ENCODE measurements at regions of chr5 and their contacts with region 1.

Region 1: GRCh38 chr5:164504141-164504772 is 998.8 kb downstream of the MAT2B start:
- DNase-seq: peak; percentile 26 to 39 (median 36)
- H3K4me3 ChIP-seq: no peak overlapping the region
- H3K4me3 Mint-ChIP-seq: peak overlapping the region in 1 of 2 donors; percentile 39
- H3K27ac ChIP-seq: no peak overlapping the region
- H3K27ac Mint-ChIP-seq: no peak overlapping the region
- H3K4me1 ChIP-seq: no peaks in the 10 kb centered on the region
- H3K4me1 Mint-ChIP-seq: peaks cover 5% of the 10 kb centered on the region
- H3K27me3 ChIP-seq: no peaks in the 10 kb centered on the region
- H3K27me3 Mint-ChIP-seq: peaks cover 0 to 5% (median 0%) of the 10 kb centered on the region in 3 donors
- CTCF ChIP-seq: peak; percentile 83

Region 2: GRCh38 chr5:163564321-163564938 is 939.8 kb before region 1 on chr5:
- intact Hi-C with region 1: loop called (anchors 5 kb)
- DNase-seq: peak; percentile 30 to 54 (median 45)
- H3K4me3 ChIP-seq: no peak overlapping the region
- H3K4me3 Mint-ChIP-seq: peak overlapping the region in 1 of 2 donors; percentile 89
- H3K27ac ChIP-seq: no peak overlapping the region
- H3K27ac Mint-ChIP-seq: no peak overlapping the region
- H3K4me1 ChIP-seq: peaks cover 9 to 10% of the 10 kb centered on the region in 2 donors
- H3K4me1 Mint-ChIP-seq: peaks cover 12% of the 10 kb centered on the region
- H3K27me3 ChIP-seq: peaks cover 29 to 46% of the 10 kb centered on the region in 2 donors
- H3K27me3 Mint-ChIP-seq: peaks cover 30 to 41% (median 31%) of the 10 kb centered on the region in 3 donors
- CTCF ChIP-seq: peak; percentile 91

Region 3: DNA sequence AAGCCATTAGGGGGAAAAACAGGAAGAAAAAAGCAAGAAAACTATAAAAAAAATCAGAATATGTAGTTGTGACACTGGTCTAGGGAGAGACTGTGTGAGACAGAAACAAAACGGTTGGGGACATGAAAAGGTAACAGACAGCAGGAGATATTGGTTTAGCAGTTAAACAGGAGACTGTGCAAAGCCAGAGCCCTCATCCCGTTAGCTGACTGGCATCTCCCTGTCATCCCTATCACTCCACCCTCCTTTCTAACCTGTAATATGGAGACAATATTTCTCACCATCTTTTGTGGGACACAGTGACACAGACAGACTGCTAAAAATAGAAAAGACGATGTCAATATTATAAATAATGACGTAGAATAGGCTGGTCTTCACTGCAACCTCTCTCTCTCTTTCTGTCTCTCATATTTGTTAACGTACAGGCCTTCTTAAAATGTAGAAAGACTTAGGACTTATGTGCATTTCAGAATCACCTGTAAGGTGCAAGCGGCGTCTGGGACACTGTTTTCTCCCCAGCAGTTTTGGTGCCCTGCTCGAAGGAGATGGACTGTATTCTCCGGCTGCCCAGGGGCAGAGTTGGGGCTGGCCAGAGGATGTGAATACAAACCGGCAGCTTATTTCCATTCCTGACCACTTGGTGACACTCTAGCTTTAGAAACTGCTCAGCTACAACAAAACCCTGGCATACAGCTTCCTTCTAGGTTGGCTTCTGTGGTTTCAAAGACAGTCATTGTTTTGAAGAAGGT is 808.3 kb before region 1 on chr5:
- intact Hi-C with region 1: loop called (anchors 10 kb)
- DNase-seq: peak; percentile 27 to 39 (median 36)
- H3K4me3 ChIP-seq: no peak overlapping the region
- H3K4me3 Mint-ChIP-seq: peak overlapping the region in 1 of 2 donors; percentile 52
- H3K27ac ChIP-seq: no peak overlapping the region
- H3K27ac Mint-ChIP-seq: no peak overlapping the region
- H3K4me1 ChIP-seq: no peaks in the 10 kb centered on the region
- H3K4me1 Mint-ChIP-seq: peaks cover 2% of the 10 kb centered on the region
- H3K27me3 ChIP-seq: no peaks in the 10 kb centered on the region
- H3K27me3 Mint-ChIP-seq: peaks cover 2 to 9% (median 4%) of the 10 kb centered on the region in 3 donors
- CTCF ChIP-seq: peak; percentile 56

Region 4: GRCh38 chr5:164013077-164013670 is 491.1 kb before region 1 on chr5:
- intact Hi-C with region 1: loop called in 1 of 2 experiments (anchors 5 kb)
- DNase-seq: peak; percentile 48 to 71 (median 50)
- H3K4me3 ChIP-seq: no peak overlapping the region
- H3K4me3 Mint-ChIP-seq: no peak overlapping the region
- H3K27ac ChIP-seq: no peak overlapping the region
- H3K27ac Mint-ChIP-seq: no peak overlapping the region
- H3K4me1 ChIP-seq: no peaks in the 10 kb centered on the region
- H3K4me1 Mint-ChIP-seq: peaks cover 3% of the 10 kb centered on the region
- H3K27me3 ChIP-seq: peaks cover 0 to 2% of the 10 kb centered on the region in 2 donors
- H3K27me3 Mint-ChIP-seq: peaks cover 0 to 3% (median 1%) of the 10 kb centered on the region in 3 donors
- CTCF ChIP-seq: peak; percentile 84